ENCODE measurements at regions of chr14 and their contacts with region 1.

Region 1: DNA sequence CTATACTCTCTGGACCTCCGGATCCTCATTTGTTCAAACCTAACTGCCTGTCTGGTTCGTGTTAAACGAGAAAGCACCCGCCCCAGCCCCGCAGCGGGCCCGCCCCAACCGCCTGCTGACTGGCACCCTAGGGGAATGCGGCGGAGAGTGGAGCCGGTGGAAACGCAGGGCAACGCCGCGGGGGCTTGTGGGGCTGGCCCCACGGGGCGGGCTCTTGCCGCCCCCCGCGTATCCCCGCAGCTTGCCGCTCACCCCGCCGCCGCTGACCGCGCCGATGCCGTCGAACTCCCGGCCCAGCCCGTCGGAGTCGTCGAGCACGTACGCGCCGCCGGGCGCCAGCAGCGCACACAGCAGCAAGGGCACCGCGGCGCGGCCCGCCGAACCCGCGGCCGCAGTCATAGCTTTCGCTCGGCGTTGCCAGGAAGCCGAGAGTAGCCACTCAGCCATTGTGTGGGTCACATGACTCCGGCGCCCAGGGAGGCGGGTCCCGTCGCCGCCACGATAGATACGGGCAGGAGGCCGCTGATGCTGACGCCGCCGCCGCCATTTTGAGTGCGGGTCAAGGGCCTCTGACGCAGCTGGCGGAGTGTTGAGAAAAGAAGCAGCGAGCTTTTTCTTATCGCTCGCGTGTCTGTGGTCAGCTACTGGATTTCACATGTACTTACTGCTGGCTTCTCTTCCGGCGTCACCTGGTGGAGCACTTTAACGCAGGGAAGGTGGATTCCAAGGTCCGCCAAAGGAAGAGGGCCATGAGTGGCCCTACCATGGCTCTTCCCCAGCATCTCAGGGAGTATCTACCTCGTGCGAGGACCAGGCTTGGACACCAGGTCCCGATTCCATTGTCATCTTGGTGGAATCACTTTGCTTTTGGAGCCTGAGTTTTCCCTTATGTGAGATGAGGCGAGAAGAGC is at the start of gene GALC:
- DNase-seq: peak; percentile 97
- H3K4me3 Mint-ChIP-seq: peak within 1 kb of the TSS; percentile 80
- H3K27ac Mint-ChIP-seq: peak within 1 kb of the TSS; percentile 91
- H3K4me1 Mint-ChIP-seq: peaks cover 56% of the 10 kb centered on the region
- H3K27me3 Mint-ChIP-seq: no peaks in the 10 kb centered on the region
- total RNA-seq, gene GALC: 24.3 to 27.6 TPM

Region 2: GRCh38 chr14:87944987-87945604 is 47.9 kb before region 1 on chr14:
- CTCF ChIA-PET with region 1: interaction called, 28 read pairs
- POLR2A ChIA-PET with region 1: interaction called, 75 read pairs
- DNase-seq: no peak
- H3K4me3 Mint-ChIP-seq: no peak overlapping the region
- H3K27ac Mint-ChIP-seq: no peak overlapping the region
- H3K4me1 Mint-ChIP-seq: peaks cover 5% of the 10 kb centered on the region
- H3K27me3 Mint-ChIP-seq: no peaks in the 10 kb centered on the region

Region 3: DNA sequence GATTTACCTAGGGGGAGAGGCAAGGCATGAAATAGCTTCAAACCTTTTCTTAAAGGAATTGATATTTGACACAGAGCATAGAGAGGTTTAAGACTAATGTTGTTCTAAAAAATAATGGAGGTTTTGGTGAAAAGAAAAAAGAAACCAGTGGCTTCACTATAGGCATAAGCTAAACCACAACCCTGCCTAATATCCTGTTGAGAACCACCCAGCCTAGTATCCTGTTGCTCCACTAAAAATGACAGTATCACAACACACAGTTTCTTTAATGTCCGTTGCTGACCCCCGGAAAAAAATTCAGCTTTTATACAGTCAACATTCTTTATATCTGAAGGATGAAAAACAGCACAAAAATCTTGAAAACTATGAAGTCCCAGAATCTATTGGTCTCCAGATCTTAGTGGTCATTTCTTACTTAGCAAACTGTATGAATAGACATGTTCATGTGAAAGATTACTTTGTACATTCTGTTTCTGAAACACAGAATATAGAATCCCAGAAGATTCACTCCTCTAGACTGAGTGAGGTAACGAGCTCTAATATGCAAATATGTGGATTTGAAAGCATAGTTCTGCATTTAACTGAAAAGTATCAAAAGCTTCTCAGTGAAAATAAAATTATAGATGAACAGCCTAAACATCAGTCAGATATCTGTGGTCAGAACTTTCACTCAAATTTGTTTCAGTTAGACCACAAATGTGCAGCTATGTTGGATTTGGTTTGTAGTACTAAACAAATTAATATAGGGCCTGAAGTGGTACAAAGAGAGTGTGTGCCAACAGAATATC is 40.5 kb before region 1 on chr14:
- CTCF ChIA-PET with region 1: interaction called, 28 read pairs
- POLR2A ChIA-PET with region 1: interaction called, 75 read pairs
- DNase-seq: no peak
- H3K4me3 Mint-ChIP-seq: peak overlapping the region; percentile 65
- H3K27ac Mint-ChIP-seq: peak overlapping the region; percentile 88
- H3K4me1 Mint-ChIP-seq: peaks cover 32% of the 10 kb centered on the region
- H3K27me3 Mint-ChIP-seq: no peaks in the 10 kb centered on the region

Region 4: DNA sequence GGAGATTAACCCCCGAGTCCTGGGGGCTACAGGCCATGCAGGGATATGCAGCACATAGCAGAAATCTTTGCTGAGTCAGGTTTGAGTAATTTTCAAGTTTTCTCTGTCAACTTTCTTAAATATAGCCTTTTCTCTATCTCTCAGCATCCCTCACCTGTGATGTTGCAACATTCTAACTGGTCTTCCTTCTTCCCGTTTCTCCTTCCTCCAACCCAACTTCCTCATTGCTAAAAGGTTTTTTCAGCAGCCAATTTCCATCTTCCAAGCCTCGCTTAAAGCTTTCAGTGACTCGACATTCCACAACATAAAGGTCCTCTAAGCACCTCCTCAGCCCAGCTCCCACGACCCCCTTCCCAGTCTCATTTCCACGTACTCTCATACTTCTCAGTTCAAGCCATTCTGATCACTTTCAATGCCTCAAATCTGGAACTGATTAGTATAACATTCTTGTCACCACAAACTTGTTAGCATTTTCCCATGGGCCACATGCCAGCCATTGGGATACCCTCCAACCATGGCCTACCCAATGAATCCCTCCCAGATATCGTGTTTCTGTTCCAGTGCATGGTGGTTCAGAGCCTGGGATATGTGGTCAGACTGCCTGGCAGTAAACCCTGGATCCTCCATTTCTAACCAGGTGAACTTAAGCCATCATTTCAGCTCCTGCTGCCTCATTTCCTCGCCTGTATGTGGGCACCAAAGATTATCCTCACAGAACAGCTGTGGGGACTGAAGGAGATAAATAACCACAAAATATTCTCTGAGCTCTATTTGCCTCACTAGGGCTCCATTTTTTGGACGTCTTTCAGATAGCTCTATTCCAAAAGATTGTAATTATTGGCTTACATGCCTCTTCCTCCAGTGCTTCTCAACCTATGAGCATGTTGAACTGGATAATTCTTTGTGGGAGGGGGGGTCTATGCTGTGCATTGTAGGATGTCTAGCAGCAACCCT is 264.3 kb after region 1 on chr14:
- CTCF ChIA-PET with region 1: no interaction called
- POLR2A ChIA-PET with region 1: no interaction called
- DNase-seq: no peak
- H3K4me3 Mint-ChIP-seq: no peak overlapping the region
- H3K27ac Mint-ChIP-seq: no peak overlapping the region
- H3K4me1 Mint-ChIP-seq: no peaks in the 10 kb centered on the region
- H3K27me3 Mint-ChIP-seq: peaks cover 5% of the 10 kb centered on the region

Region 5: DNA sequence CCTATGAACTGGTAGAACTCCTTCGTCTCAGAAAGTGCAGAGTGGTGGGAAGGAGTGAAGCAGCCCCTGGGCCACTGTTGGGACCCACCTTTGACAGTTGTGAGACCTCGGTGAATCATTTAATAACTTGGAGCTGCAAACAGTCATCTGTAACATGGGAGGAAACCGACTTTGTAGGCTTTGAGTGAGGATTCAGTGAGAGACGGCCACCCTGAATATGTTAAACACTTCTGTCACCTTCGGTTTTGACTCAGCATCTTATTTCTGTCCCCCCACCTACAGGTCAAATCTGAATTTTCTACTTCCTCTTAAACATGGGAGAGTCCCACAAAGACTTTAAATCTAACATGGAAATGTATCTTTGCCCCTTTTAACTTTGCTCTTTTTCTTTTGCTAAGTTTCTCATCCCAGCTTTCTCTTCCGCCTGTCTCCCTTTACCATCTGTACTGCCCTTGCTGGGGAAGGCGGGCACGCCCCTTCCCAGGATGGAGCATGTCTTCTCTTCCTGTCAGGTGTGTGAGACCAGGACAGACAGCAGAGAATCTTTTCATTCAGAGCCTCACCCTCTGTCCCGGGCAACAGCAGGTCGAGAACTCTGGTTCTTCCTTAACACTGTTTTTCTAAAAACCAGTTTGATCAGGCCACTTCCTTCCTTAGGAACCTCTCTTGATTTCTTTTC is 606.9 kb after region 1 on chr14:
- CTCF ChIA-PET with region 1: no interaction called
- POLR2A ChIA-PET with region 1: no interaction called
- DNase-seq: peak; percentile 37
- H3K4me3 Mint-ChIP-seq: peak overlapping the region; percentile 34
- H3K27ac Mint-ChIP-seq: peak overlapping the region; percentile 84
- H3K4me1 Mint-ChIP-seq: peaks cover 50% of the 10 kb centered on the region
- H3K27me3 Mint-ChIP-seq: no peaks in the 10 kb centered on the region